ENCODE measurements at regions of chr3 and their contacts with region 1.

Region 1: DNA sequence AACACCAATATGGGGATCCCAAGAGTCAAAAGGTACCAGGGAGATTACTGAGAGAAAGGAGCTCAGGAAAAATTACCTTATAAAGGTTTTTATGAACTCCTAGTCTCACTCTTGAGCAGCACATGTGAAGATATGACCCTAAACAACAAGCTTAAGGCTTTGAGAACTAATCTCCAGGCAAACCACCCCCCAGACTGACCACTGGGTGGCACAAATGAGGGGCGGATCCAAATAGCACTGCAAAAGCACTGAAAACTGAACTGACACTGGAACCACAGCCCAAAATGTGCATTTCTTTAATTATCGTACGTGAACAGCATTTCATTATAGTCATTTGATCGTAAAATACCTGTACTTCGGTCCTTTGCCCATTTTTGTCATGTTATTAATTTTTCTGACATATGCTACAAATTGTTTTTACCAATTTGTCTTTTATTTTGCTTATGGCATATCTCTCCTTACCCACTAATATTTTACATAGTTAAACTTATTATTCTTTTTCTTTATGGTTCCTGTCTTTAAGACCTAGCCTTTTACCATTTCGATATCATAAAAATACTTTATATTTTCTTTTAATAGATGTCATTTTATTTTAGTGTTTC is 31.5 kb upstream of the TFDP2 start:
- DNase-seq: no peak
- H3K4me3 ChIP-seq: no peak overlapping the region
- H3K27me3 ChIP-seq: no peaks in the 10 kb centered on the region
- CTCF ChIP-seq: peak; percentile 76

Region 2: DNA sequence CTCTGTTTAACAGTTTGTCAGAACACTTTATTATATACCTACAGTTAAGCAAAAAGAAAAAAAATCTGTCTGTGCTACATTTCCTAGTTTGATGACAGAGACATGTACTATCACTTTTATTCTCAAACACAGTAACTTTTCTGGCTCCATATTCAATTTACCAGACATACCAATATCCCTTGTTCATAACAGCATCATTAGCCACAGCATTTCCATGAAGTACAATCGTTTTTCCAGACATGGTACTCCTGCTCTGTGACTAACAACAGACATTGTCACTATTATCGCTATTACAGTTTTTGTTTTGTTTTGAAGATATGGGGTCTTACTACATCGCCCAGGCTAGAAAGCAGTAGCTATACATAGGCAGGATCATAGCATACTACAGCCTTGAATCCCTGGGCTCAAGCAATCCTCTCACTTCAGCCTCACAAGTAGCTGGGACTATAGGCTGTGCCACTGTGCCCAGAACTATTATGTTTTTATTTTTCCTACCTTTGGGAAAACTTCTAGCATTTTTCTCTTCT is 46.0 kb before region 1 on chr3:
- CTCF ChIA-PET with region 1: no interaction called
- POLR2A ChIA-PET with region 1: no interaction called
- DNase-seq: no peak
- H3K4me3 ChIP-seq: no peak overlapping the region
- H3K27me3 ChIP-seq: no peaks in the 10 kb centered on the region
- CTCF ChIP-seq: no peak

Region 3: GRCh38 chr3:142211035-142211434 is 30.2 kb after region 1 on chr3:
- CTCF ChIA-PET with region 1: interaction called, 11 read pairs
- POLR2A ChIA-PET with region 1: no interaction called
- DNase-seq: no peak
- H3K4me3 ChIP-seq: no peak overlapping the region
- H3K27me3 ChIP-seq: no peaks in the 10 kb centered on the region
- CTCF ChIP-seq: peak; percentile 26

Region 4: DNA sequence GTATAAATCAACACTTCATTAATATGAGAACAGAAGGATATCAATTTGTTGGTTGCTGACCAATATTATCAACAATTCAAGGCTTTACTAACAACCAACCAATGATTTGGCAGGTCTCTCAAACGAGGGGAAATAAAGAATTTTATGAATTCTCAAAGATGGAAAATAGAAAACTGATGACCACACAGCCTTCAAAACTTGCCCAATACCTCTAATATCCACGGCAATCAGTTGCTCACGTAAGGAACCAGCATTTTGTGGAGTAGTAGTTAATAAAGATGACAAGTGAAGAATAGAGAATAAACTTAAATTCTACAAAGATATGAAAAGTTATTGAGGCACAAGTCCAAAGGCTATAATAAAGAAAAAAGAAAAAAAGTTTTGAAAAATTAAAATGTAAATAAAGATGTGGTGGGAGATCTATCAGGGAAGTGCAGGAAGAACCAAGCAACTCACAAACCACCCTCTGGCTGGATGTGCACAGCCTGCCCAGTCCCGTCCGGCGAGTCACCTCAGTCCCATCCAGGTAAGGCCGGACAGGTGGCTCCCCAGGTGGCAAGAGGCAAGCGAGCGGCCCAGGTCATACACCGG is 43.7 kb after region 1 on chr3:
- CTCF ChIA-PET with region 1: no interaction called
- POLR2A ChIA-PET with region 1: no interaction called
- DNase-seq: no peak
- H3K4me3 ChIP-seq: peak overlapping the region; percentile 91
- H3K27me3 ChIP-seq: no peaks in the 10 kb centered on the region
- CTCF ChIP-seq: no peak

Region 5: GRCh38 chr3:142279965-142280590 is 99.2 kb after region 1 on chr3:
- CTCF ChIA-PET with region 1: interaction called, 28 read pairs
- POLR2A ChIA-PET with region 1: no interaction called
- DNase-seq: no peak
- H3K4me3 ChIP-seq: no peak overlapping the region
- H3K27me3 ChIP-seq: no peaks in the 10 kb centered on the region
- CTCF ChIP-seq: peak; percentile 59

Measured in BJ (cell line).